ENCODE measurements at regions of chr6 and their contacts with region 1.

Region 1: GRCh38 chr6:30672445-30673253 is at the start of gene DHX16:
- DNase-seq: peak; percentile 98
- H3K4me3 ChIP-seq: peak within 1 kb of the TSS; percentile 85
- H3K27ac ChIP-seq: peak within 1 kb of the TSS; percentile 67 to 77
- H3K4me1 ChIP-seq: peaks cover 0 to 18% (median 12%) of the 10 kb centered on the region in 4 donors
- H3K27me3 ChIP-seq: no peaks in the 10 kb centered on the region
- CTCF ChIP-seq: peak; percentile 81 to 85

Region 2: GRCh38 chr6:30272017-30272416 is 400.6 kb before region 1 on chr6:
- intact Hi-C with region 1: no loop called
- DNase-seq: no peak
- H3K4me3 ChIP-seq: no peak overlapping the region
- H3K27ac ChIP-seq: no peak overlapping the region
- H3K4me1 ChIP-seq: peaks cover 0 to 4% (median 0%) of the 10 kb centered on the region in 4 donors
- H3K27me3 ChIP-seq: no peaks in the 10 kb centered on the region
- CTCF ChIP-seq: no peak

Region 3: DNA sequence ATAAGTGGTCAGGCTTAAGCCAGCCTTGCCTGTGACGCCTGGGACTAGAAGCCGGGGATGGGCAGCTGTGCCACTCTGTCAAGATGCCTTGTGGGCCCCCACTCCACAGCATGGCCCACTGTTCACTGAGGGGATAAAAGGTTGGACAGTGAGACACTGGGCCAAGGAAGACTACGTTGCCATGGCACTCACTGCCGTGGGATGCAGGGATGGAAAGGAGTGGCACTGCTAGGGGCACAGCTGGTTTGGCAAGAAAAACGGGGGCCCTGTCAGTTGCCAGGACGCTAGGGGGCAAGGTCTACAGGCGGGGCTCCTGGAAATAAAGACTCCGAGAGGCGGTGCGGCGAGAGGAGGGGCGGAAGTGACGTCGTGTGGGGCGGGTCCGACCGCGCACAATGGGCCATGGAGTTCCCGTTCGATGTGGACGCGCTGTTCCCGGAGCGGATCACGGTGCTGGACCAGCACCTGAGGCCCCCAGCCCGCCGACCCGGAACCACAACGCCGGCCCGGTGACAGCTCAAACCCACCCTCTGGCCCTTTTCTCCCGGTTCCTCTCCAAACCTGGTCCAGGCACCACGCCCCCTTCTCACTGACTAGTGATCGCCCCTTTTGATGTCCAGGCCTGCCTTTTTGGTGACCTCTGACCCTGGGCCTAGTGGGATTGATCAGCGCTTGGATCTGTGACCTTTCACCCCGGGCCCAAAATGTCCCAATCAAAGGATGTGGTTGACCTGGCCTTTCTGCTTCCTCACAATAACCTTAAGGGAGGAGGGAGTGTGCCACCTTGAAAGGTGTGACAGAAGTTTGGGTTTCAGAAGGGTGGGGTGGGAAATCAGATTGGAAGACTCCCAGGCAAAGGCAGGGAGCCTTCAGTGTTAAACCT is 45.9 kb before region 1 on chr6 and contains the start of gene ATAT1:
- intact Hi-C with region 1: loop called (anchors 10 kb)
- DNase-seq: peak; percentile 84 to 92
- H3K4me3 ChIP-seq: peak within 1 kb of the TSS; percentile 47 to 58
- H3K27ac ChIP-seq: peak within 1 kb of the TSS; percentile 82 to 83
- H3K4me1 ChIP-seq: peaks cover 0 to 23% (median 9%) of the 10 kb centered on the region in 4 donors
- H3K27me3 ChIP-seq: no peaks in the 10 kb centered on the region
- CTCF ChIP-seq: peak; percentile 21 to 39

Region 4: DNA sequence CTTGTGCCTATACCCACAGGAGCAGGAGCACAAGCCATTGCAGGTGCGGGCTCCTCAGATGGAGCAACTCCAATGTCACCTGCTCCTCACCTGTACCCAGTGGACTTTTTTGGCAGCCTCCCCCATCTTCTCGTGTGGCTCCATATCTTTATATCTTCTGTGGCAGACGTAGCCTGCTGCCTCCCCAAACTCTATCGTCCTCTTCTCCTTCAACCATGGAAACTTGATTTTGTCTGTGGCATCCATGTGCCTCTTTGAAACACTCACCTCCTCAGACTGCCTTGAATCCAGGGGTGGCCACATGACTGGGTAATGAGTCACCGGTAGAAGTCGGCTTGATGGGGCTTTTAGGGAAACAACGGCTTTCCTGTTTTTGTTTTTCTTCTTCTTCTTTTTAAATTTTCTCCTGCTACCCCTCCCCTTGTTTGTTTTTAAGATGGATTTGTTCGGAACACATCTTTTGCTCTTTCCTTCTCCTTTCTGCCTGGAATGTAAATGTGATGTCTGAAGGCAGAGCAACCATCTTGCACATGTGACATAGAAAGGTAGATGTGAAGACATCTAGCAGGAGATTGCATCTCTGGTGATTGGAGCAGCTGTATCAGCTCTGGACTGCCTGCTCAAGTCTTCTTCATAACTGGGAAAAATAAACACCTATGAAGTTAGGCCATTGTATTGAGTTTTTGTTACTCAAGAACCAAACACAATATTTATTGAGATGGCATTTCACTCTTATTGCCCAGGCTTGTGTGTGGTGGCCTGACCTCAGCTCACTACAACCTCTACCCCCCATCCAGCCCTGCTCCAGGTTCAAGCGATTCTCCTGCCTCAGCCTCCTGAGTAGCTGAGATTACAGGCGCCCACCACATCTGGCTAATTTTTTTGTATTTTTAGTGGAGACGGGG is 141.7 kb after region 1 on chr6:
- intact Hi-C with region 1: loop called (anchors 10 kb)
- DNase-seq: peak in 1 of 2 donors; percentile 57
- H3K4me3 ChIP-seq: no peak overlapping the region
- H3K27ac ChIP-seq: peak overlapping the region in 1 of 2 donors; percentile 40
- H3K4me1 ChIP-seq: peaks cover 0 to 23% (median 10%) of the 10 kb centered on the region in 4 donors
- H3K27me3 ChIP-seq: no peaks in the 10 kb centered on the region
- CTCF ChIP-seq: no peak

Measured in tibial artery (tissue), 4 donors.